Left lung (tissue), 14 donors: ENCODE measurements at regions of chr15 and their contacts with region 1.

Region 1: DNA sequence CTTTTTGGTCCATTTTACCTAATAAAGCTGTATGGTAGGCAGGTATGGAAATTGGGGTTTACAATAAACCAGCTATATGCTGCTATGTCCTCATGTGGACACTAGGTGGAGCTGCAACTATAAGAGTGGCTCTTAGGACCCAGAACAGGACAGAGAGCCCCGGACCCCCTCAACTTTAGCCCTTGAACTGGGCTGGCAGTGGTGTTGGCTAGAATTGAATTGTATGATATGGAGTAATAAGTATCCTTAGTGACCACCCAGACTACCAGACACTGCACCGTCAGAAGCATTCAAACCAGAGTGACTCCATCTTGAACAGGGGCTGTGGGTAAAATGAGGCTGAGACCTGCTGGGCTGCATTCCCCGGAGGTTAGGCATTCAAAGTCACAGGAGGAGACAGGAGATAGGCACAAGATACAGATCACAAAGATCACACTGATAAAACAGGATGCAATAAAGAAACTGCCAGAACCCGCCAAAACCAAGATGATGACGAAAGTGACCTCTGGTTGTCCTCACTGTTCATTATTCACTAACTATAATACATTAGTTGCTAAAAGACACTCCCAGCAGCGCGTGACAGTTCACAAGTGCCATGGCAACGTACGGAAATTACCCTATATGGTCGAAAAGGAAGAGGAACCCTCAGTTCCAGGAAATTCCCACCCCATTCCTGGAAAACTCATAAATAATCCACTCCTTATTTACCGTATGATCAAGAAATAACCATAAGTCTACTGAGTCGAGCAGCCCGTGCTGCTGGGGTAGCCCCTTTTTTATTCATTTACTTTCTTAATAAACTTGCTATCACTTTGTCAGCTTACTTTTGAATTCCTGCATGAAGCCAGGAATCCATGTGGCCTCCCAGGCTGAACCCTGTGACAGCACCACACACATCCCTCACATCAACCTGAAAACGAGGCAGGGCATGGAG is 68.7 kb upstream of the BLM start:
- DNase-seq: peak in 3 of 4 donors; percentile 70 to 86 (median 84)
- ATAC-seq: peak; percentile 90
- H3K4me3 ChIP-seq: no peak overlapping the region
- H3K27ac ChIP-seq: peak overlapping the region in 1 of 2 donors; percentile 80
- H3K4me1 ChIP-seq: peaks cover 4 to 30% of the 10 kb centered on the region in 2 donors
- H3K27me3 ChIP-seq: no peaks in the 10 kb centered on the region
- CTCF ChIP-seq: peak; percentile 88 to 92

Region 2: GRCh38 chr15:90691982-90692773 is 43.8 kb after region 1 on chr15:
- intact Hi-C with region 1: loop called in 1 of 2 experiments (anchors 5 kb)
- DNase-seq: no peak
- ATAC-seq: no peak
- H3K4me3 ChIP-seq: no peak overlapping the region
- H3K27ac ChIP-seq: no peak overlapping the region
- H3K4me1 ChIP-seq: no peaks in the 10 kb centered on the region
- H3K27me3 ChIP-seq: no peaks in the 10 kb centered on the region
- CTCF ChIP-seq: no peak

Region 3: GRCh38 chr15:90789462-90789861 is 141.1 kb after region 1 on chr15:
- intact Hi-C with region 1: no loop called
- DNase-seq: no peak
- ATAC-seq: no peak
- H3K4me3 ChIP-seq: no peak overlapping the region
- H3K27ac ChIP-seq: no peak overlapping the region
- H3K4me1 ChIP-seq: no peaks in the 10 kb centered on the region
- H3K27me3 ChIP-seq: no peaks in the 10 kb centered on the region
- CTCF ChIP-seq: no peak

Region 4: DNA sequence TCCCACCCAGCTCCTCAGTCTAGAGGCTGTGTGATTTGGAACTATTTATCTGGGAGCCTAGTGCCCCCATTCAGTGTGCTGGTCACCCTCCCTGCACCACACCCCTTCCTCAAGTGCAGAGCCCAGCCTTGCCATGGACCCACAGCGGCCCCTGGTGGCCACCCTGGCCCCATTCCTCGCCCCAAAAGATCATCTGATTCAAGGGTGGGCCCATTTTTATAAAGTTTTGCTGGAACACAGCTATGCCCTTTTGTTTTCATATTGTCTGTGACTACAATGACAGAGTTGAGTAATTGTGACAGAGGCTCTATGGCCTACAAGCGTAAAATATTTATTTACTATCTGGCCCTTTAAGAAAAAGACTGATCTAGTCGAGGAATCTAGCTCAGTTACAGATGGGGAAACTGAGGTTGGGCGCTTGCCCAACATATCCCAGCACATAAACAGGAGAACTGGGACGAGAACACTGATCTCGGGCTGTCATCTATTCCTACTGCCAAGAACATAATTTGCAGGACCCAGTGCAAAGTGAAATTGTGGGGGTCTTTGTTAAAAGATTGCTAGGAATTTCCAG is 237.7 kb after region 1 on chr15:
- intact Hi-C with region 1: loop called in 1 of 2 experiments (anchors 5 kb)
- DNase-seq: peak; percentile 75 to 95 (median 84)
- ATAC-seq: peak; percentile 77
- H3K4me3 ChIP-seq: peak overlapping the region; percentile 66
- H3K27ac ChIP-seq: peak overlapping the region; percentile 97 to 98
- H3K4me1 ChIP-seq: peaks cover 24 to 43% of the 10 kb centered on the region in 2 donors
- H3K27me3 ChIP-seq: no peaks in the 10 kb centered on the region
- CTCF ChIP-seq: peak; percentile 96 to 97